PC-9 (cell line): ENCODE measurements at regions of chr3 and their contacts with region 1.

Region 1: GRCh38 chr3:11601446-11602238 is 42.1 kb downstream of the VGLL4 start:
- DNase-seq: no peak
- H3K4me3 ChIP-seq: no peak overlapping the region
- H3K27ac ChIP-seq: peak overlapping the region; percentile 68
- H3K4me1 ChIP-seq: peaks cover 32% of the 10 kb centered on the region
- H3K27me3 ChIP-seq: no peaks in the 10 kb centered on the region
- CTCF ChIP-seq: no peak

Region 2: DNA sequence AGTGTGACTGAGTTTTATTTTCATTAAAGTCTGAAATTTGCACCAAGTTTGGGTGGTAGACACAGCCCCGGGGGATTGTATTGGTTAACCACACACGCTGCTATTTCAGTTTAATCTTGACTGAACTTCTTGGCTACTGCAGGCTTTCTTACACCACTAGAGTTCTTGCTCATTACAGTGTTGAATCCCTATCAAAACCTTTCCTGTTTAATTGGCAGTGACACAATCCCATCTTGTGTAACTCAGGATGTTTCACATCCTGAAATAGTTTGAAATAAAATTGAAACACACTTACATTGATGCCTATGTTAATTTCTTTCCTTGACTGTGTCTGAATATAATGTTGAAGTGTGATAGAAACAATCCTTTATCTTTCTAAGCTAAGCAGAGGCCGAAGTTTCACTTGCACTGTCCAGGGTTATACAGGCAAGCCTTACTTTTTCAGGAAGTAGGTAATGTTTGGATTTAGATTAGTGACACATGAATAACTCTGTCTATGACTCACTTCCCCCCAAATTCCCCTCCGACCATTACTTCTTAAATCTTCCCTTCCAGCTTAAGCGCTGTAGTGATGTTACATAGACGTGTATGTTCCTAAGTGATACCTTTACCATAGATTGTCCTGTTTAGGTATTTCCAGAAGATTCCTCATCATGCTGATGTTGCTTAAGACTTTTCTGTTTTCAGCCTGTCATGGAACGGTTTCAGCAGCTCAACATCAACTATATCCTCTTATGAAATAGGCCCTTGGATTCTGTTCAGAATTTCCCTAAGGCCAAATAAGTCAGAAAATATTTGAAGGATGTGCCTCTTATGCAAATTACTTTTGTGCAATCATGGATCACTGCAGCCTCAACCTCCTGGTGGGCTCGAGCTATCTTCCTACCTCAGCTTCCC is 312.6 kb before region 1 on chr3:
- CTCF ChIA-PET with region 1: no interaction called
- POLR2A ChIA-PET with region 1: no interaction called
- intact Hi-C with region 1: loop called (anchors 5 kb)
- DNase-seq: peak; percentile 35 to 92
- H3K4me3 ChIP-seq: peak overlapping the region; percentile 42; the same call in 1 of the 2 replicates
- H3K27ac ChIP-seq: peak overlapping the region; percentile 99
- H3K4me1 ChIP-seq: peaks cover 78% of the 10 kb centered on the region
- H3K27me3 ChIP-seq: no peaks in the 10 kb centered on the region
- CTCF ChIP-seq: no peak; the same call in 1 of the 2 replicates

Region 3: GRCh38 chr3:11548721-11549131 is 52.9 kb before region 1 on chr3:
- CTCF ChIA-PET with region 1: no interaction called
- POLR2A ChIA-PET with region 1: no interaction called
- intact Hi-C with region 1: loop called (anchors 2 kb)
- DNase-seq: peak in 1 of 2 experiments; percentile 75
- H3K4me3 ChIP-seq: no peak overlapping the region
- H3K27ac ChIP-seq: no peak overlapping the region; the same call in 1 of the 2 replicates
- H3K4me1 ChIP-seq: no peaks in the 10 kb centered on the region
- H3K27me3 ChIP-seq: no peaks in the 10 kb centered on the region
- CTCF ChIP-seq: no peak

Region 4: DNA sequence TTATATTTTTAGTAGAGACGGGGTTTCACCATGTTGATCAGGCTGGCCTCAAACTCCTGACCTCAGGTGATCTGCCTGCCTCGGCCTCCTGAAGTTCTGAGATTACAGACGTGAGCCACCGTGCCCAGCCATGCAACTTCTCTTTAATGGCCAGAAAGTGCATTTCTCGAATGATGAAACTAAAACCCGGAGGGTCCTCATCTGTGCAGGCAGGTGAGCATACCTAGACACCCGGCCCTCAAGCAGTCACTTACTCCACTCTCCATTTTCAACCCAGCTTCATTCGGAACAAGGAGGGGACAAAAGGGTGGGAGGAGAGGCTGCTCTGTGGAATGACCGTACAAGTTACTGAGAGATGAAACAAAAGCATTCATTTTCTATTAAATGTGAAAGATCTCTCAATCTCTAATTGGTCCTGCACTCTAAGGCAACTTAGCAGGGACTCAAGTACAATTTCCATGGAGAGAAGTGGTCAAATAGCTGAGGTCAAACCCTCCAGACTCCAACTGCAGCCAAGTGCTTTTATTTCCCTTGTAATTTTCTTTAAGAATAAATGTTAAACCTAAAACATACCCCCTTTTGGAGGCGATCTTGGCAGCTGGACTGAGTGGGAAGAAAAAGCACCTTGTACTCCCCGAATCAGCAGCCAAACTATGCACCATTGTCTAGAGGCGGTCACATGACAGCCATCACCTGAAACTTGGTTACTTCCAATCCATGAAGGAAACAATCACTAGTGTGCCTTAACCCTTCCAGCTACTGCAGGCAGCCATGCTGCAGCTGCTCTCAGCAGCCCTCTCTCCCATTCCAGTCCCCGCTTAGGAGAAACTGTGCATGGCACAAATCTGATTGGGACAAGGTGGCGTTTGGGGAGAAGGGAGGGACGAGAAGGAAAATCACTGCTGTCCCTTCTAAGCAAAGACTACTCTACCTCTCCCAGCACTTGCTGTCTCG is 20.1 kb before region 1 on chr3:
- CTCF ChIA-PET with region 1: no interaction called
- POLR2A ChIA-PET with region 1: no interaction called
- intact Hi-C with region 1: no loop called
- DNase-seq: no peak
- H3K4me3 ChIP-seq: no peak overlapping the region
- H3K27ac ChIP-seq: no peak overlapping the region
- H3K4me1 ChIP-seq: no peaks in the 10 kb centered on the region
- H3K27me3 ChIP-seq: no peaks in the 10 kb centered on the region
- CTCF ChIP-seq: no peak

Region 5: GRCh38 chr3:11591391-11592282 is 10.0 kb before region 1 on chr3:
- CTCF ChIA-PET with region 1: interaction called, 6 read pairs
- POLR2A ChIA-PET with region 1: no interaction called
- intact Hi-C with region 1: loop called (anchors 1 kb)
- DNase-seq: peak; percentile 57 to 74
- H3K4me3 ChIP-seq: no peak overlapping the region
- H3K27ac ChIP-seq: peak overlapping the region; percentile 26
- H3K4me1 ChIP-seq: peaks cover 28% of the 10 kb centered on the region
- H3K27me3 ChIP-seq: no peaks in the 10 kb centered on the region
- CTCF ChIP-seq: no peak

Region 6: GRCh38 chr3:11643605-11644087 is 42.0 kb after region 1 on chr3 and contains the start of gene VGLL4:
- CTCF ChIA-PET with region 1: no interaction called
- POLR2A ChIA-PET with region 1: no interaction called
- intact Hi-C with region 1: loop called (anchors 1 kb)
- DNase-seq: peak; percentile 71 to 73
- H3K4me3 ChIP-seq: peak within 1 kb of the TSS; percentile 77
- H3K27ac ChIP-seq: peak within 1 kb of the TSS; percentile 66
- H3K4me1 ChIP-seq: peaks cover 25% of the 10 kb centered on the region
- H3K27me3 ChIP-seq: no peaks in the 10 kb centered on the region
- CTCF ChIP-seq: no peak
- total RNA-seq, gene VGLL4: 39.1 and 42.2 TPM in 2 replicates

Region 7: DNA sequence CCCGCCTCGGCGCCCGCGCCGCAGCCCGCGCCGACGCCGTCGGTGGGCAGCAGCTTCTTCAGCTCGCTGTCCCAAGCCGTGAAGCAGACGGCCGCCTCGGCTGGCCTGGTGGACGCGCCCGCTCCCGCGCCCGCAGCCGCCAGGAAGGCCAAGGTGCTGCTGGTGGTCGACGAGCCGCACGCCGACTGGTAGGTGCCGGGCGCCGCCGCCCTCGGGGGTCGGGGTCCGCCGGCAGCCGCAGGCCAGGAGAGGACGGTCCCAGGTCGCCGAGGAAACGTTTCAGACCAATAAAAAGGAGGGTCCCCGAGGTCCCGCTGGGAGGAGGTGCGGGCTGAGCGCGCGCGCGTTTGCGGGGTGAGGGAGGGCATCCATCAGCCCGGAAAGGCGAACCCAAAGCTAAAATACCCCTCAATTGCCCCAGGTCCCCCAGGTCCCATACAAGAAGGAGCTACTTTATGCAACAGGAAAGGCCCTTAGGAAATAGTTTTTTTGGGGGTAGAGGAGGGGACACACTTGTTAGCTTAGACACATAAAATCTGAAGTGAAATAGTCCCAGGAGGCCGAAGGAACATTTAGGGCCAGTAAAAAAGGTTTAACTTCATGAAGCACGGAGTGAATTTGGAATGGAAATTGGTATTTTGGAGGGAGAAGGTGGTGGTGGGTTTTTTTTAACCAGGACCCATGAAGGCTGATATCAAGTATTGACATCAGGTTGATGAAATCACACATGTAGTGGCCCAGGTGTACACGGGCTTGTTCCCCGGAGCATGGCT is 403.3 kb after region 1 on chr3:
- CTCF ChIA-PET with region 1: no interaction called
- POLR2A ChIA-PET with region 1: no interaction called
- intact Hi-C with region 1: no loop called
- DNase-seq: no peak
- H3K4me3 ChIP-seq: no peak overlapping the region
- H3K27ac ChIP-seq: no peak overlapping the region
- H3K4me1 ChIP-seq: no peaks in the 10 kb centered on the region
- H3K27me3 ChIP-seq: peaks cover 78% of the 10 kb centered on the region
- CTCF ChIP-seq: no peak